ENCODE measurements at regions of chr11 and their contacts with region 1.

Region 1: GRCh38 chr11:61827571-61828378 is at the start of gene FADS2:
- DNase-seq: peak; percentile 87 to 93
- ATAC-seq: peak; percentile 81 to 90
- H3K4me3 ChIP-seq: peak within 1 kb of the TSS; percentile 100
- H3K27ac ChIP-seq: peak within 1 kb of the TSS; percentile 96 to 100
- H3K4me1 ChIP-seq: peaks cover 43% of the 10 kb centered on the region
- CTCF ChIP-seq: peak; percentile 8; the same call in 1 of the 3 replicates
- EP300 ChIP-seq: peak in 1 of 2 experiments; percentile 46; a peak in 1 of 5 replicates
- POLR2A ChIP-seq: peak; percentile 98
- RAD21 ChIP-seq: peak; percentile 26 to 29; a peak in 2 of 5 replicates
- polyA plus RNA-seq, gene FADS2: 215 and 278 TPM in 2 replicates

Region 2: DNA sequence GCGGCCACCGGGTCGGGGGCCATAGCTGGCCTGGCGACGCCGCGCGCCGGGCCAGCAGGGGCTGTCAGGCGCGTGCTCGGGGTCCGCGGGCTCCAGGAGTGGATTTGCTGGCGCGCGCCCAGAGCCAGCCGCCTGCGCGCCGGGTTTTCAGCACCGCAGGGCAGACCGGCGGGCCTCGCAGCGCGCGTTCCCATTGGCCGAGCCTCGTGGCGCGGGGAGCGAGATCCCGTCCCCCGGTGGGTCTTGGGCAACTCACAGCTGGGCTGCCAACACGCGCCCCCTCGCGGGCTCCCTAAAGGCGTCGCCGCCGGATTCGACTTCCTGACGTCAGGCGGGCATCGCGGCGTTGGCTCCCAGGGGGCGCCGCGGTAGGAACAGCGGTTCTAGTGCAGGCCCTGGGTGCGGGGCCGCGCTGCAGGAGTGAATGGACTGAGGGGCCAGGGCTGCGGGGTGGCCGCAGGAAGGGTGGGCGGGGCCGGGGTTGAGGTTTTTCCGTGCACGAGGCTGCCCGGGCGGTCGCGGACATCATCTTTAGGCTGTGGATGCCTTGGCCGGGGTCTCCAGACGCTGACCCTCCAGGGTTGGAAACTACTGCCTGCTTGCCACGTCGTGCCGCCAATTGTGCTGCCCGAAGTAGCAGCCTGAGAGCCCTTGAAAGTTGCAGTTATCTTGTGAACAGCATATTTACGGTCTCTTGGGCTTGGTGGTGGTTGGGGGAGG is 10.9 kb before region 1 on chr11 and contains the start of gene FADS1:
- CTCF ChIA-PET with region 1: interaction called, 33 read pairs
- POLR2A ChIA-PET with region 1: interaction called, 71 read pairs
- DNase-seq: peak; percentile 96 to 97
- ATAC-seq: peak; percentile 67 to 75
- H3K4me3 ChIP-seq: peak within 1 kb of the TSS; percentile 83
- H3K27ac ChIP-seq: peak within 1 kb of the TSS; percentile 98 to 99
- H3K4me1 ChIP-seq: peaks cover 44% of the 10 kb centered on the region
- CTCF ChIP-seq: peak; percentile 76
- EP300 ChIP-seq: 0 out of 5 replicates have a peak, but pooled peaks of 1 of the 2 experiments have one; percentile 10
- POLR2A ChIP-seq: peak; percentile 53
- RAD21 ChIP-seq: peak; percentile 42 to 60; a peak in 4 of 5 replicates
- polyA plus RNA-seq, gene FADS1: 163 and 175 TPM in 2 replicates

Region 3: GRCh38 chr11:61841636-61842527 is 14.1 kb after region 1 on chr11:
- CTCF ChIA-PET with region 1: interaction called, 13 read pairs
- POLR2A ChIA-PET with region 1: no interaction called
- DNase-seq: no peak
- ATAC-seq: no peak
- H3K4me3 ChIP-seq: no peak overlapping the region
- H3K27ac ChIP-seq: no peak overlapping the region
- H3K4me1 ChIP-seq: no peaks in the 10 kb centered on the region
- CTCF ChIP-seq: no peak
- EP300 ChIP-seq: no peak
- POLR2A ChIP-seq: no peak
- RAD21 ChIP-seq: no peak

Region 4: DNA sequence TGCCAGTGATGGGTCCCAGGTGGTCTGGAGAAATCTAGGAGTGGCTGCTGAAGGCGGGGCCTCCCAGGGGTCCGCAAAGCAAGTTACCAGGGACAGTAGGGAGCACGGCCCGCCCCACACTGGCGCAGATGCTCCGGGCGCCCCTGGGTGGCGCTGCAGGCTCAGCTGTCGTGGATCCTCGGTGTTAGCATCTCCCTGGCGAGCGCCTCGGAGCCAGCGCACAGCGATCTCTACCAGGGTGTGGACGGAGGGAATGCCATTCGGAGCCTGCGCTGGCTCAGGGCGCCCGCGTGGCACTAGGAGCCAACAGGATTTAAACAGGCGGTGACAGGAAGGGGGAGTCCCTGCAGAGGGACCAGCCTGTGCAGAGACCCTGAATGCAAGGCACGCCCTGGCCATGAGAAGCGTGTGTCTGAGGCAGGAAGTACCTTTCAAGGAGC is 43.4 kb after region 1 on chr11:
- CTCF ChIA-PET with region 1: interaction called, 12 read pairs
- POLR2A ChIA-PET with region 1: interaction called, 5 read pairs
- DNase-seq: peak; percentile 82 to 91
- ATAC-seq: peak; percentile 80 to 93
- H3K4me3 ChIP-seq: no peak overlapping the region
- H3K27ac ChIP-seq: peak overlapping the region; percentile 47 to 52; a peak in 5 of 6 replicates
- H3K4me1 ChIP-seq: peaks cover 31% of the 10 kb centered on the region
- CTCF ChIP-seq: peak; percentile 95
- EP300 ChIP-seq: no peak
- POLR2A ChIP-seq: no peak
- RAD21 ChIP-seq: peak; percentile 95 to 97